ENCODE measurements at regions of chr12 and their contacts with region 1.

Region 1: DNA sequence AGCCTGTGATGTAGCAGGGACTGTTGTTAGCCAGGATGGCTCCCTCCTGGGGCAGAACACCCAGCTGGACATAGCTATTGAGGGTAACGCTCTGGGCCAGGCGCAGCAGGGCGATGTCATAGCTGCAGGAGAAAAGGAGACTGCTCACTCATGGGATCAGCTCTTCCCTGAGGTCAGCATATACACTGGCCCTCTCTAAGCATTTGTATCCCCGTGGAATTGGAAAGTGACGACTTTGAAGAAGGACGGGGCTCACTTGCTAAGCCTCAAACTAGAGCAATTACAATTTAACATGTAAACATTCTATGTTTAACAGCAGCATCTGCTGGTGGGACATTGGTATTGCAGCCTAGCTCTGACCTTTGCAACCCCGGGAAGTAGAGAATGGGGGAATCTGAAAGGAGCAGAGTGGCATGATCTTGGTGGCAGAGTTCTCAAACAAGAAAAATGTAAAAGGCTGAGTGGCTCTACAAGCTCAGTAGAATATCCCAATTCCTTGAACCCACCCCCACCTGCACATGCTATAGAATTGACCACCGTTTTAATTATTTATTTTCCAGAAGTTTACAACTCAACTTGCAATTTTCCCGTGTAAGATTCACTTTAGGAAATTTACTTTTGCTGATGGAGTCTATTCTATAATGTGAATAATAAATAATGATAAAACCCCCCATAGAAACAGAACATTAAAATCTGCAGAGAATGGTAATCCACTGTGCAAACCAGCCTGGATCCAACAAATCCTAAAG is 5.0 kb downstream of the CELA1 start:
- DNase-seq: peak; percentile 30
- ATAC-seq: peak; percentile 87
- H3K4me3 Mint-ChIP-seq: peak overlapping the region; percentile 20
- H3K27ac Mint-ChIP-seq: peak overlapping the region; percentile 31
- H3K4me1 Mint-ChIP-seq: peaks cover 48% of the 10 kb centered on the region
- H3K27me3 Mint-ChIP-seq: no peaks in the 10 kb centered on the region
- CTCF ChIP-seq: peak; percentile 73

Region 2: DNA sequence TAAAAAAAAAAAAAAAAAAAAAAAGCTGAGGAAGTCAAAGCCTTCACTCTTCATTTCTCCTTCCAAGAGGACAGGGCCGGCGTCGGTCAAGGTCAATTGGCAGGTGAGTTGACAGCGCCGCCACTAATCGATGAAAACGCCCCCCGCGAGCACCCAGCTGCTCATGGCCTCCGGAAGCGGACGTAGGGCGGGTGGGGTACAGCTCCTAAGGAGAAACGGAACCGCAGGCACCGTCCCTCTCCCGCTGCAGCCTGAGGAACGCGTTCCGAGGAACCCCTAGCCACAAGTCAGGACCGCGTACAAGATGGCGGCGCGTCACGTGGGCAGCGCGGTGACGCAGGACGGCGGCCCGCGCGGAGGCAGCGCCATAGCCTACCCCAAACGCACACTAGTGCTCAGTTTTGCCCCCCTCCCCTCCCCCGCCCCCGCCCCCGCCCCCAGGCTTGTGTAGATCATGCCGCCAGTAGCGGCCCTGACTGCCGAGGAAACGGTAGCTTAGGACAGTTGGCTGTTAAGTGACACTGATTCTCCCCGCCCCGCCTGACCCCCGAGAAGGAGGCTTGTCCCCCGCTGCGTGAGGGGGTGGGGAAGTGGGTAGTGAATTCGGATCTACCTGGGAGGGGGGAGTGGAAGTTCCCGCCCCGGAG is 577.7 kb before region 1 on chr12 and contains the start of gene ATF1:
- CTCF ChIA-PET with region 1: interaction called, 3 read pairs
- POLR2A ChIA-PET with region 1: no interaction called
- intact Hi-C with region 1: loop called (anchors 1 kb)
- DNase-seq: peak; percentile 89
- ATAC-seq: peak; percentile 80
- H3K4me3 Mint-ChIP-seq: peak within 1 kb of the TSS; percentile 95
- H3K27ac Mint-ChIP-seq: peak within 1 kb of the TSS; percentile 96
- H3K4me1 Mint-ChIP-seq: peaks cover 36% of the 10 kb centered on the region
- H3K27me3 Mint-ChIP-seq: no peaks in the 10 kb centered on the region
- CTCF ChIP-seq: no peak
- total RNA-seq, gene ATF1: 37.7 and 42.5 TPM in 2 replicates

Region 3: DNA sequence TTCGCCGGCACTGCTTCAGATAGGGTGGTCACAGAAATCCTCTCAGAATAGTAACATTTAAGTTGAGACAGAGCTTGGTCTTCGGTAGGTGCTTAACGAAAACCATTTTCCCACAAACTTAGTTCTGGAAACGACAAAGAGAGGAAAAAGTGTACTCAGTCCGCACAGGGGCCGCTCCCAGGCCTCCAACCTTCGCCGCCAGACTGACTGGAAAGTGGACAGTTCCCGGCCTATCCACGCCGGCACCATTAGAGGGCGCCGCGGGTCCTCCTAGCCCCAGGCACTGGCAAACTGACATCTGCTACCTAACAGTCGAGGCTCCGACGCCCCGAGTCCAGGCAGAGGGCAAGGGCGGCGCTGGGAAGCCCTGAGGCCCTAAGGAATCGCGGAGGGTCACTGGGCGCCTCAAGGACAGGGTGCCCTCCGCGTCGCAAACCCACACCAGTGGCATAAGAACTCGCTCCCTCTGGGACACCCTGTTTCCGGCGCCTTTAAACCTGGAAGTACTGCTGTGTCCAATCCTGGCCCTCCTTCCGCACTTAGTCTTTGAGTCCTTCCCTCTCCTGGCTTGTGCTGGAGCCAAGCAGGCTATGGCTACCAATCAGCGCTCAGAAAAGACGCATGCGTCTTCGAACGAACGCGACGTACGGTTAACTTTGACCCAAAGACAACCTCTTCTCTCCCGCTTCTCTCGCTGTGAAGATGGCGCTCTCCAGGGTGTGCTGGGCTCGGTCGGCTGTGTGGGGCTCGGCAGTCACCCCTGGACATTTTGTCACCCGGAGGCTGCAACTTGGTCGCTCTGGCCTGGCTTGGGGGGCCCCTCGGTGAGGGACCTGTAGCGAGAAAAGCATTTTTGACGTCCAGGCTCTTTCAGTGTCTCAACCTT is 293.5 kb before region 1 on chr12 and contains the start of gene LETMD1:
- CTCF ChIA-PET with region 1: interaction called, 11 read pairs
- POLR2A ChIA-PET with region 1: interaction called, 4 read pairs
- intact Hi-C with region 1: loop called (anchors 1 kb)
- DNase-seq: peak; percentile 81
- ATAC-seq: peak; percentile 96
- H3K4me3 Mint-ChIP-seq: peak within 1 kb of the TSS; percentile 92
- H3K27ac Mint-ChIP-seq: peak within 1 kb of the TSS; percentile 87
- H3K4me1 Mint-ChIP-seq: peaks cover 30% of the 10 kb centered on the region
- H3K27me3 Mint-ChIP-seq: no peaks in the 10 kb centered on the region
- CTCF ChIP-seq: peak; percentile 64
- total RNA-seq, gene LETMD1: 82.8 and 92.0 TPM in 2 replicates

Region 4: GRCh38 chr12:51238510-51239334 is 102.7 kb before region 1 on chr12 and contains the start of gene DAZAP2:
- CTCF ChIA-PET with region 1: interaction called, 6 read pairs
- POLR2A ChIA-PET with region 1: interaction called, 11 read pairs
- intact Hi-C with region 1: no loop called
- DNase-seq: peak; percentile 89
- ATAC-seq: peak; percentile 91
- H3K4me3 Mint-ChIP-seq: peak within 1 kb of the TSS; percentile 98
- H3K27ac Mint-ChIP-seq: peak within 1 kb of the TSS; percentile 100
- H3K4me1 Mint-ChIP-seq: peaks cover 43% of the 10 kb centered on the region
- H3K27me3 Mint-ChIP-seq: no peaks in the 10 kb centered on the region
- CTCF ChIP-seq: no peak
- total RNA-seq, gene DAZAP2: 209 and 214 TPM in 2 replicates

Region 5: GRCh38 chr12:51293696-51294095 is 47.7 kb before region 1 on chr12:
- CTCF ChIA-PET with region 1: interaction called, 14 read pairs
- POLR2A ChIA-PET with region 1: no interaction called
- intact Hi-C with region 1: no loop called
- DNase-seq: no peak
- ATAC-seq: no peak
- H3K4me3 Mint-ChIP-seq: no peak overlapping the region
- H3K27ac Mint-ChIP-seq: peak overlapping the region; percentile 50
- H3K4me1 Mint-ChIP-seq: peaks cover 20% of the 10 kb centered on the region
- H3K27me3 Mint-ChIP-seq: no peaks in the 10 kb centered on the region
- CTCF ChIP-seq: no peak

Region 6: GRCh38 chr12:51351913-51352532 is 10.6 kb after region 1 on chr12:
- CTCF ChIA-PET with region 1: interaction called, 34 read pairs
- POLR2A ChIA-PET with region 1: interaction called, 7 read pairs
- intact Hi-C with region 1: no loop called
- DNase-seq: no peak
- ATAC-seq: no peak
- H3K4me3 Mint-ChIP-seq: no peak overlapping the region
- H3K27ac Mint-ChIP-seq: no peak overlapping the region
- H3K4me1 Mint-ChIP-seq: peaks cover 8% of the 10 kb centered on the region
- H3K27me3 Mint-ChIP-seq: no peaks in the 10 kb centered on the region
- CTCF ChIP-seq: no peak

Region 7: DNA sequence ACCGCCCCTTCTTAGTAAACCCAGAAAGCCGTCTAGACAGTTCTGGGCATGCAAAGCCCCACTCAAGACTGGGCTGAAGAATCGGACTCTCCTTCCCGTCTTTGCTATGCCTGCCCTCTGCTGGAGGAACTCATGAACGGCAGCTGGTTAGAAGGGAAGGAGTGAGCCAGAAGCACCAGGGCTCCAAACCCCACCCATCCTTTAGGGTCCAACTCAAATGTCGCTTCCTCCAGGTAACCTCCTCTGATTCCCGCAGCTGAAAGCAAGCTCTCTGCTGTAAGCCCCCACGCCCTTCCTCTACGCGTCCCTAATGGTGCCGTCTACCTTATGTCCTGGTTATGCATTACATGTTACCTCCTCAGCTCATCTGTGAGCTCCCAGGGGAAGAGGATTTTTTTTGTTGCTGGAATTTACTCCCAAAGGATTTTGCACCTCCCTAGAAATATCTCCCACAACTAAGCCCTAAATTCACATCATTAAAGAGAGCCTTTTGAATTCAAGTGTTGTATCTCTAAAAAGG is 190.6 kb after region 1 on chr12:
- CTCF ChIA-PET with region 1: interaction called, 16 read pairs
- POLR2A ChIA-PET with region 1: interaction called, 3 read pairs
- intact Hi-C with region 1: loop called (anchors 1 kb)
- DNase-seq: peak; percentile 56
- ATAC-seq: peak; percentile 97
- H3K4me3 Mint-ChIP-seq: no peak overlapping the region
- H3K27ac Mint-ChIP-seq: no peak overlapping the region
- H3K4me1 Mint-ChIP-seq: peaks cover 11% of the 10 kb centered on the region
- H3K27me3 Mint-ChIP-seq: peaks cover 28% of the 10 kb centered on the region
- CTCF ChIP-seq: peak; percentile 51